Heart left ventricle (tissue), 16 donors: ENCODE measurements at regions of chr5 and their contacts with region 1.

Region 1: DNA sequence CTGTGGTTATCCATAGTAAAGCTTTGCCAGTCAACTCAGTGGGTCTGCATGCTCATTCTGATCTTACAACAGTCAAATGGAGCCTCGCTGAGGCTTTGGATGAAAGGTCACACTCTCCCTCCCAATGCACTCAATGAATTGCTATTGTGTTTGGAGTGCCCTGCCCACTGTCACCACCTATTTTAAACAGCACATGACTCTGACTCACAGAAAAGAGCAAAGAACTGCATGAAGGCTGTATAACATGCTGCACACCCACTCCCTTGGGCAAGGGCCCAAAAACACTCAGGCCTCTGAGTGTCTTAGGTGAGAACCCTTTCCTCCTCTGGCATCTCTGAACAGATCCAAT is 118.7 kb upstream of the CCDC112 start:
- DNase-seq: peak in 4 of 5 donors; percentile 40 to 70 (median 49)
- ATAC-seq: peak; percentile 24 to 84 (median 80)
- H3K4me3 ChIP-seq: no peak overlapping the region
- H3K27ac ChIP-seq: peak overlapping the region in 5 of 12 donors; percentile 3 to 68 (median 27)
- H3K4me1 ChIP-seq: peaks cover 0 to 33% (median 18%) of the 10 kb centered on the region in 12 donors
- H3K27me3 ChIP-seq: no peaks in the 10 kb centered on the region
- CTCF ChIP-seq: no peak
- POLR2A ChIP-seq: no peak

Region 2: DNA sequence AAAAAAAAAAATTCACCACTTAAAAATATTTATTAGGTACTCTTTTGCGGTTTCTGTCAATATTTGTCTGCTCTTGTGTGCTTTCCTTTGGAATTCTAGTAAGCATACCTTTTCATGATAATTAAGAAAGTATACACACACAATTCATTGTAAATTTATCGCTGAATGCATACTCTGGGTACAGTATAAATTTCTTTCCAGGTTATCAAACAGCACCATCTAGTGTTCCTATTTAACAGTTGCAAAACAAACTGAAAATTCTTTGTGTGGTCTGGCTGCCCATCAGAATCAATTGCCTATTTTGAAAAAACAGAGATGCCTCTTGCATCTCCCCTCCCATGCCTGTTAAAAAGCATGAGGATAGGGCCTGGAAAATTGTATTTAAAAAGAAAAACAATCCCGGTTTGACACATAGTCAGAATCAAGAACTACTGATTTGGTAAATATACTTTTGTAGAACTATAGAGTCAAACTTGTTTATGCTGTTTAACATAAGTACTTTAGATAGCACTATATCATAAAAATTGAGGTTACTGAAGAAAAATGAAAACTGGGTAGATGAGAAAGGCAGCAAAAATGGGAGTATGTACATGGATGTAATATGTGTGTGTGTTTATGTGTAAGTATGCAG is 168.6 kb before region 1 on chr5:
- intact Hi-C with region 1: no loop called
- DNase-seq: no peak
- ATAC-seq: peak in 1 of 4 donors; percentile 55
- H3K4me3 ChIP-seq: no peak overlapping the region
- H3K27ac ChIP-seq: no peak overlapping the region
- H3K4me1 ChIP-seq: peaks cover 0 to 27% (median 11%) of the 10 kb centered on the region in 12 donors
- H3K27me3 ChIP-seq: no peaks in the 10 kb centered on the region
- CTCF ChIP-seq: peak; percentile 59 to 80 (median 68)
- POLR2A ChIP-seq: no peak

Region 3: GRCh38 chr5:115450741-115451140 is 35.6 kb after region 1 on chr5:
- intact Hi-C with region 1: loop called in 2 of 10 experiments (anchors 5 kb)
- DNase-seq: no peak
- ATAC-seq: no peak
- H3K4me3 ChIP-seq: no peak overlapping the region
- H3K27ac ChIP-seq: peak overlapping the region in 5 of 12 donors; percentile 7 to 69 (median 21)
- H3K4me1 ChIP-seq: peaks cover 0 to 33% (median 8%) of the 10 kb centered on the region in 12 donors
- H3K27me3 ChIP-seq: no peaks in the 10 kb centered on the region
- CTCF ChIP-seq: no peak
- POLR2A ChIP-seq: no peak